Transverse colon (tissue), 4 donors: ENCODE measurements at regions of chr9 and their contacts with region 1.

Region 1: GRCh38 chr9:10443868-10444204 is 169.0 kb downstream of the PTPRD start:
- DNase-seq: no peak
- H3K4me3 ChIP-seq: no peak overlapping the region
- H3K27ac ChIP-seq: no peak overlapping the region
- H3K4me1 ChIP-seq: no peaks in the 10 kb centered on the region
- H3K27me3 ChIP-seq: no peaks in the 10 kb centered on the region
- CTCF ChIP-seq: no peak
- EP300 ChIP-seq: no peak
- POLR2A ChIP-seq: no peak

Region 2: DNA sequence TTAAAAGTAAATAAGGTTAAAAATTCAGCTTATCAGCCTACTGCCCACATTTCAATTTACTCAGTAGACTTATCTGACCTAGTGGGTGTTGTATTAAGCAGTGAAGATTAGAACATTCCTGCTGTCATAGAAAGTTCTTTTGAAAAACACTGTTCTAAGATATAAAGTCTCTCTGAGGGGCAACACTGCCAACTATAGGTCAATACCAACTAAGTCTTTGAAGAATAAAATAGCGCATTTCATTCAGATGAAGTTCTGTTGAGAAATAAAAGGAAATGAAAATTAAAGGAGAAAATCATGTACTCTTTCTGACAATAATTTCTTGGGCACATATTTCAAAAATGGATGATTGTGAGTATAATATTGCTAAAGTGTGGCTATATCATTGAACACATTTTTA is 82.1 kb after region 1 on chr9:
- in situ Hi-C with region 1: loop called in 1 of 4 experiments (anchors 25 kb)
- intact Hi-C with region 1: no loop called
- DNase-seq: no peak
- H3K4me3 ChIP-seq: no peak overlapping the region
- H3K27ac ChIP-seq: no peak overlapping the region
- H3K4me1 ChIP-seq: no peaks in the 10 kb centered on the region
- H3K27me3 ChIP-seq: no peaks in the 10 kb centered on the region
- CTCF ChIP-seq: no peak
- EP300 ChIP-seq: no peak
- POLR2A ChIP-seq: no peak